Activated B cell treated with CpG ODN at 0.5 μM for 24 hours (primary cell): ENCODE measurements at regions of chr17 and their contacts with region 1.

Region 1: GRCh38 chr17:48060249-48060648 is 12.1 kb downstream of the NFE2L1 start:
- DNase-seq: no peak
- ATAC-seq: no peak
- H3K4me3 Mint-ChIP-seq: no peak overlapping the region
- H3K27ac Mint-ChIP-seq: no peak overlapping the region
- H3K4me1 Mint-ChIP-seq: peaks cover 24% of the 10 kb centered on the region
- H3K27me3 Mint-ChIP-seq: no peaks in the 10 kb centered on the region
- CTCF ChIP-seq: no peak

Region 2: GRCh38 chr17:46758623-46759022 is 1301.6 kb before region 1 on chr17:
- CTCF ChIA-PET with region 1: no interaction called
- POLR2A ChIA-PET with region 1: no interaction called
- intact Hi-C with region 1: no loop called
- DNase-seq: no peak
- ATAC-seq: no peak
- H3K4me3 Mint-ChIP-seq: no peak overlapping the region
- H3K27ac Mint-ChIP-seq: no peak overlapping the region
- H3K4me1 Mint-ChIP-seq: peaks cover 13% of the 10 kb centered on the region
- H3K27me3 Mint-ChIP-seq: no peaks in the 10 kb centered on the region
- CTCF ChIP-seq: no peak

Region 3: GRCh38 chr17:48037036-48037837 is 23.0 kb before region 1 on chr17 and contains the start of gene COPZ2:
- CTCF ChIA-PET with region 1: interaction called, 8 read pairs
- POLR2A ChIA-PET with region 1: interaction called, 12 read pairs
- intact Hi-C with region 1: loop called (anchors 1 kb)
- DNase-seq: peak; percentile 53
- ATAC-seq: peak; percentile 93
- H3K4me3 Mint-ChIP-seq: peak within 1 kb of the TSS; percentile 86
- H3K27ac Mint-ChIP-seq: no peak within 1 kb of the TSS
- H3K4me1 Mint-ChIP-seq: peaks cover 14% of the 10 kb centered on the region
- H3K27me3 Mint-ChIP-seq: peaks cover 17% of the 10 kb centered on the region
- CTCF ChIP-seq: no peak
- total RNA-seq, gene COPZ2: 3.3 and 4.1 TPM in 2 replicates

Region 4: DNA sequence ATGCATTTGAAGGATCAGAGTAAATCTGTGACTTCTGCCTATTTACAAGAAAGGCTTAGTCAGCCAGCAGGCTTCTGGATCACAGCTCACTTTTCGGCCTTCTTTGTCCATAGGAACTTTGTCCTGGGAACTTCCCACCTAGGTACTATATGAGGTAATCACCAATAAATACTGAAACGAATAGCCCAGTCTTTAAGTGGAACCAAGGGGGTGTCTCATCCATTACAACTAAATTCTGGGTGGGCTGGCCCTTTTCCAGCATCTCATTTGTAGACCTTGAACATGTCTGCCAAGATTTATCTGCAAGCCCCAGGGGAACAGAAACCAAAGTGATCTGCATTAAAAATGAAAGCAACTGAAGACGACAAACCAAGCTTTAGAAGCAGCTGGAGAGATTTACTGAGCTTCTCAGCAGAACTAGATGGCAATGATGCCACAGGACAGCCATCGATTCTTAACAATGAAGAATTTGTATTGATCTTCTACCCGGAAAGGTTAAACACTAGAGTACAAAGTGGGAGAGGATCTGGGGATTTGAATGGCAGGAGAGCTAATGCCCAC is 102.8 kb after region 1 on chr17:
- CTCF ChIA-PET with region 1: no interaction called
- POLR2A ChIA-PET with region 1: no interaction called
- intact Hi-C with region 1: no loop called
- DNase-seq: no peak
- ATAC-seq: no peak
- H3K4me3 Mint-ChIP-seq: no peak overlapping the region
- H3K27ac Mint-ChIP-seq: no peak overlapping the region
- H3K4me1 Mint-ChIP-seq: peaks cover 7% of the 10 kb centered on the region
- H3K27me3 Mint-ChIP-seq: no peaks in the 10 kb centered on the region
- CTCF ChIP-seq: no peak

Region 5: DNA sequence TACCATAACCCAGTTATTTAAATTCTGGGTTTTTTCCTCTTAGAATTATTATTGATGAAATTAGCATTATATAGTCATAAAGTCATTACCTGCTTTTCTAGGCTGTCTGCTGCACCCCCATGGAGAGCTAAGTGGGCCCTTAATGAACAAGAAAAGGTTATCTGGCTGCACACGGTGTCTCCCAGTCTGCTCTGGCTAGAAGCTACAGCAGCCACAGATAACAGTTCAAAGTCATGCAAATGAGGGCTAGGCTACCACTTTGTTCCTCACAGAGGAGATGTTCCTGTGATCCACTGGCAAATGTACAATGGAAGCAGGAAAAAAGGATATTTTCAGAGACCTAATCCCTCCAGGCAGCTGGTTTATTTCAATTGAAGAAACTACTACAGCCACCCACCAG is 159.4 kb after region 1 on chr17:
- CTCF ChIA-PET with region 1: no interaction called
- POLR2A ChIA-PET with region 1: no interaction called
- intact Hi-C with region 1: no loop called
- DNase-seq: no peak
- ATAC-seq: no peak
- H3K4me3 Mint-ChIP-seq: no peak overlapping the region
- H3K27ac Mint-ChIP-seq: no peak overlapping the region
- H3K4me1 Mint-ChIP-seq: no peaks in the 10 kb centered on the region
- H3K27me3 Mint-ChIP-seq: no peaks in the 10 kb centered on the region
- CTCF ChIP-seq: no peak

Region 6: GRCh38 chr17:48295362-48296288 is 235.4 kb after region 1 on chr17:
- CTCF ChIA-PET with region 1: no interaction called
- POLR2A ChIA-PET with region 1: no interaction called
- intact Hi-C with region 1: no loop called
- DNase-seq: no peak
- ATAC-seq: peak; percentile 77
- H3K4me3 Mint-ChIP-seq: peak overlapping the region; percentile 81
- H3K27ac Mint-ChIP-seq: peak overlapping the region; percentile 90
- H3K4me1 Mint-ChIP-seq: peaks cover 24% of the 10 kb centered on the region
- H3K27me3 Mint-ChIP-seq: no peaks in the 10 kb centered on the region
- CTCF ChIP-seq: no peak